GM13977 (cell line): ENCODE measurements at regions of chr11 and their contacts with region 1.

Region 1: GRCh38 chr11:6333112-6333511 is 12.8 kb upstream of the CAVIN3 start:
- DNase-seq: no peak
- CTCF ChIP-seq: no peak

Region 2: GRCh38 chr11:6022956-6023355 is 310.2 kb before region 1 on chr11:
- in situ Hi-C with region 1: loop called (anchors 25 kb)
- DNase-seq: peak; percentile 31
- CTCF ChIP-seq: peak; percentile 49

Region 3: DNA sequence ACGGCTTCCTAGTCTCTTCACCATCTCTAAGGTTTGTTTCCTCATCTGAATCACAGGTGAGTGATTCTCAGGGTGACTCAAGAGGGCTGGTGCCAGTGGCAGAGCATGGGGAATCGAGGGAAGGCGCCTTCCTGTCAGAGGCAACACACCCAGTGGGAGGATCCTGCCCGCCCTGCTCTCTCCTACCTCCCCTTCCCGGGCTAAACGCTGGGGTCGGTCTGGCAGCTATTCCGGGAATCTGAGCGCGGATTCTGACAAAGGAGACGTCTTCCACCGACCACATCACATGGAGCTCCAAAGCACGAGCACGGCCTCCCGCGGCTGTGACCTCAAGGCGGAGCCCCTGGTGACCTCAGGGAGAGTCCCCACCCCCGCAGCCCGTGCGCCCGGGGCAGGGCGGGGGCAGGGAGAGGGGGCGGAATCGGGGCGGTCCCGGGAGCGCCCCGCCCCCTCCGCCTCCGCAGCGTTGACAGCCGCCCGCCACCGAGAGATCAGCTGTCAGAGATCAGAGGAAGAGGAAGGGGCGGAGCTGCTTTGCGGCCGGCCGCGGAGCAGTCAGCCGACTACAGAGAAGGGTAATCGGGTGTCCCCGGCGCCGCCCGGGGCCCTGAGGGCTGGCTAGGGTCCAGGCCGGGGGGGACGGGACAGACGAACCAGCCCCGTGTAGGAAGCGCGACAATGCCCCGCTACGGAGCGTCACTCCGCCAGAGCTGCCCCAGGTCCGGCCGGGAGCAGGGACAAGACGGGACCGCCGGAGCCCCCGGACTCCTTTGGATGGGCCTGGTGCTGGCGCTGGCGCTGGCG is 57.0 kb after region 1 on chr11 and contains the start of gene SMPD1:
- in situ Hi-C with region 1: no loop called
- DNase-seq: peak; percentile 96
- CTCF ChIP-seq: no peak